Aorta (tissue), 5 donors: ENCODE measurements at regions of chr2 and their contacts with region 1.

Region 1: DNA sequence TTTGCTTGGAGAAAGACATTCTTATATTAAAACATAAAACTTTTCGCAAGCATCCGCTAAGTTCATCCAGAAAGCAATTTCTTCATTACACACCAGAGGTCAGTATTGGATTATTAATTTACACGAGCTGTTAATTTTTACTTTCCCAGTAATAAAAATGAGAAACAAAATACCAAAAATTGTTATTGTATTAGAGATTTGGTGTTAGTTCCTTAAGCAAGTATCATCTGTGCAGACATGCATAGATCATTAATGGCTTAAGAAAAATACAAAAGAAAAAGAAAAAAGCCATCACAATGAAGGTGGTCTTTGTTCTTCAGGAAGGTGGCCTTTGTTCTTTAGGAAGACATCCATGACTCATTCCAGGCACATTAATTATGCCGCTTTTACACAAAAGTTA is 53.6 kb upstream of the HNMT start:
- DNase-seq: no peak
- ATAC-seq: no peak
- H3K4me3 ChIP-seq: no peak overlapping the region
- H3K27ac ChIP-seq: no peak overlapping the region
- H3K4me1 ChIP-seq: no peaks in the 10 kb centered on the region
- H3K27me3 ChIP-seq: no peaks in the 10 kb centered on the region

Region 2: DNA sequence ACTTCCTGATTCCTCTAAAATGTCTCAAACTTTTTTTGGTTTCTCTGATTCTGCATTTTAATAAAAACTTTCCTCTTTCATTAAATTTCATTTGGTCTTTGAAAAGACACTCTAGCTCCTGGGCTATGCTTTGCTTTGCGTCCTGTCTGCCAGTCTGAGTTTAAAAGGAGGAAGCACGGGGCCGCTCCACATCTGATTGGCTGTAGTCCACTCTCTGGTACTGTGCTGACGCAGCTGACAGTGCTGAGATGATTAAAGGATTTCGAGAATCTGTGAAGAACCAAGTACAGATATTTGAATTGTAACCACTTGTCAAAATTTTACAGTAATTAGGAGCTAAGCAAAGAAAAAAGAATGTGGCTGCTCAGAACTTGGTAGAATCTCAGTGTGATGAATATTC is 146.0 kb before region 1 on chr2:
- intact Hi-C with region 1: no loop called
- DNase-seq: no peak
- ATAC-seq: no peak
- H3K4me3 ChIP-seq: no peak overlapping the region
- H3K27ac ChIP-seq: no peak overlapping the region
- H3K4me1 ChIP-seq: no peaks in the 10 kb centered on the region
- H3K27me3 ChIP-seq: no peaks in the 10 kb centered on the region

Region 3: DNA sequence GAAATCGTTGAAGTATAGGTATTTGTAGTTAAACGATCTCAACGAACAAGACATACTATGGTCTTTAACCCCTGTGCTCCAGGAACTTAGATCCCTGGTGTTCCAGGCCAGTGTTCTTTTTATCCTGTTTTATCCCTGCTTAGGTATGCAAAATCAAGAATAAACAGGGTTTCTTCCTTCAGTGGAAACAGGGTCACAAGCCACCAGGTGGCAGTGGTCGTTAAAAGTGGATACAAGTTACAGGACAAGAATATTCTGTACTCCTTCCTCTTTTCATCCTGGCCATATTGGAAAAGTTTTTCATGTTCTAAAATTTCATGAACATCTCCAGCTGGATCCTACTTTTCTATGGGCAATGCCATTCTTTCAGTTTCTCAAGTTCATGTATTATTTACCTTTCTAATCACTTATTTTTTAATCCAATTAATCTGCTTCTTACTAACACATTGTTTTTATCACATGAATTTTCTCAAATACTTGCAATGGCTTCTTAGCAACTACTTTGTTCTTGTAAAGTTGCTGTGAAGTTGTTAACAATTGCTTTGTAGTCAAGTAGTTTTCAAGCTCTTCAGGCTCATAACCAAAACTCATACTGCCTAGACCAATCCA is 37.2 kb after region 1 on chr2:
- intact Hi-C with region 1: no loop called
- DNase-seq: peak; percentile 86 to 90
- ATAC-seq: peak; percentile 67
- H3K4me3 ChIP-seq: no peak overlapping the region
- H3K27ac ChIP-seq: no peak overlapping the region
- H3K4me1 ChIP-seq: peaks cover 0 to 3% of the 10 kb centered on the region in 2 donors
- H3K27me3 ChIP-seq: no peaks in the 10 kb centered on the region

Region 4: GRCh38 chr2:138787053-138787666 is 876.5 kb after region 1 on chr2:
- intact Hi-C with region 1: loop called (anchors 5 kb)
- DNase-seq: no peak
- ATAC-seq: no peak
- H3K4me3 ChIP-seq: no peak overlapping the region
- H3K27ac ChIP-seq: no peak overlapping the region
- H3K4me1 ChIP-seq: no peaks in the 10 kb centered on the region
- H3K27me3 ChIP-seq: no peaks in the 10 kb centered on the region

Region 5: DNA sequence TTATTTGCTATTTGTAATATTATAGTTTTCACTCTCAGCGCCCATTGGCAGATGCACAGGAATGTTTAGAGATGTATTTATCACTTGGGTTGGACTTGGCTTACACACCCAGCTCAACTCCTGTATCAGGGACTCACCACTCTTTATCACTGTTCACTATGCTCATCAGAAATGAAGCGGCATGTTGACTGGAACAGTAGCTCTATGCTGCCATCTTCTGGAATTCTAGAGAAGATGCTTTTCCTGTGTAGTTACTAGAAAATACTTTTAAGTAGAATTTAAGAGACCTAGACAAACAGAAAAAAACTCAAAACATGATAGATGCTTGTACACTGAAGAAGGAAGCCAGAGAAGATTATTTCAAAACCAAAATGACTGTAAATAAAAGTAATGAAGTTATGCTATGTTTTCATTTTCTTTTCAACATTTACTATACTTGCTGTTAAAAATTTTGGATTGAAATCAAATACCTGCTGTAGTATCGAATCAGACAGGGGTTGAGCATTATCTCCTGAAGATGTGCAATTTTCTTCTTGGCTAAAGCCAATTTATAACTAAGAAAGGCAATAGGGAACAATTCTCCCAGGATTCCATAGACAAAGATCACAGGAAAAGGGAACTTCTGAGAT is 916.9 kb after region 1 on chr2:
- intact Hi-C with region 1: loop called (anchors 2 to 5 kb)
- DNase-seq: no peak
- ATAC-seq: peak; percentile 85
- H3K4me3 ChIP-seq: no peak overlapping the region
- H3K27ac ChIP-seq: no peak overlapping the region
- H3K4me1 ChIP-seq: no peaks in the 10 kb centered on the region
- H3K27me3 ChIP-seq: no peaks in the 10 kb centered on the region